ENCODE measurements at regions of chr1 and their contacts with region 1.

Region 1: GRCh38 chr1:203871107-203871875 is 9.9 kb downstream of the SNRPE start:
- DNase-seq: peak; percentile 82
- H3K4me3 ChIP-seq: no peak overlapping the region
- H3K27ac ChIP-seq: no peak overlapping the region
- H3K4me1 ChIP-seq: peaks cover 14% of the 10 kb centered on the region
- H3K27me3 ChIP-seq: no peaks in the 10 kb centered on the region
- CTCF ChIP-seq: peak; percentile 86 to 90
- POLR2A ChIP-seq: no peak

Region 2: GRCh38 chr1:203888807-203889251 is 17.5 kb after region 1 on chr1:
- CTCF ChIA-PET with region 1: interaction called, 16 read pairs
- POLR2A ChIA-PET with region 1: interaction called, 3 read pairs
- dilution Hi-C with region 1: no loop called
- intact Hi-C with region 1: no loop called
- DNase-seq: peak; percentile 92
- H3K4me3 ChIP-seq: no peak overlapping the region
- H3K27ac ChIP-seq: peak overlapping the region; percentile 92
- H3K4me1 ChIP-seq: peaks cover 18% of the 10 kb centered on the region
- H3K27me3 ChIP-seq: no peaks in the 10 kb centered on the region
- CTCF ChIP-seq: no peak
- POLR2A ChIP-seq: no peak

Region 3: GRCh38 chr1:204017032-204017431 is 145.7 kb after region 1 on chr1:
- CTCF ChIA-PET with region 1: interaction called, 10 read pairs
- POLR2A ChIA-PET with region 1: no interaction called
- dilution Hi-C with region 1: no loop called
- intact Hi-C with region 1: no loop called
- DNase-seq: no peak
- H3K4me3 ChIP-seq: no peak overlapping the region
- H3K27ac ChIP-seq: no peak overlapping the region
- H3K4me1 ChIP-seq: no peaks in the 10 kb centered on the region
- H3K27me3 ChIP-seq: peaks cover 14 to 15% of the 10 kb centered on the region in 2 experiments
- CTCF ChIP-seq: no peak
- POLR2A ChIP-seq: no peak

Region 4: DNA sequence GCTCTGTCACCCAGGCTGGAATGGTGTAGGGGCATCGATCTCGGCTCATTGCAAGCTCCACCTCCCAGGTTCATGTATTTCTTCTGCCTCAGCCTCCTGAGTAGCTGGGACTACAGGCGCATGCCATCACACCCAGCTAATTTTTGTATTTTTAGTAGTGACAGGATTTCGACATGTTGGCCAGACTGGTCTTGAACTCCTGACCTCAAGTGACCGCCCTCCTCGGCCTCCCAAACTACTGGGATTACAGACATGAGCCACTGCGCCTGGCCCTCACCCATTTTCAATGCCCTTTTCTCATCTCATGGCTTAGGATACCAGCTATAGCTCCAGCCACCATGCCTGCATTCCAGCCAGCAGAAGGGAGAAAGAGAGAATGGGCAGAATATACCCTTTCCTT is 188.7 kb after region 1 on chr1:
- CTCF ChIA-PET with region 1: interaction called, 15 read pairs
- POLR2A ChIA-PET with region 1: no interaction called
- dilution Hi-C with region 1: no loop called
- intact Hi-C with region 1: no loop called
- DNase-seq: no peak
- H3K4me3 ChIP-seq: no peak overlapping the region
- H3K27ac ChIP-seq: no peak overlapping the region
- H3K4me1 ChIP-seq: peaks cover 4% of the 10 kb centered on the region
- H3K27me3 ChIP-seq: peaks cover 0 to 2% of the 10 kb centered on the region in 2 experiments
- CTCF ChIP-seq: no peak
- POLR2A ChIP-seq: no peak

Region 5: GRCh38 chr1:204080163-204080903 is 209.0 kb after region 1 on chr1:
- CTCF ChIA-PET with region 1: interaction called, 83 read pairs
- POLR2A ChIA-PET with region 1: no interaction called
- dilution Hi-C with region 1: no loop called
- intact Hi-C with region 1: no loop called
- DNase-seq: no peak
- H3K4me3 ChIP-seq: no peak overlapping the region
- H3K27ac ChIP-seq: no peak overlapping the region
- H3K4me1 ChIP-seq: peaks cover 31% of the 10 kb centered on the region
- H3K27me3 ChIP-seq: no peaks in the 10 kb centered on the region
- CTCF ChIP-seq: no peak
- POLR2A ChIP-seq: no peak

Region 6: DNA sequence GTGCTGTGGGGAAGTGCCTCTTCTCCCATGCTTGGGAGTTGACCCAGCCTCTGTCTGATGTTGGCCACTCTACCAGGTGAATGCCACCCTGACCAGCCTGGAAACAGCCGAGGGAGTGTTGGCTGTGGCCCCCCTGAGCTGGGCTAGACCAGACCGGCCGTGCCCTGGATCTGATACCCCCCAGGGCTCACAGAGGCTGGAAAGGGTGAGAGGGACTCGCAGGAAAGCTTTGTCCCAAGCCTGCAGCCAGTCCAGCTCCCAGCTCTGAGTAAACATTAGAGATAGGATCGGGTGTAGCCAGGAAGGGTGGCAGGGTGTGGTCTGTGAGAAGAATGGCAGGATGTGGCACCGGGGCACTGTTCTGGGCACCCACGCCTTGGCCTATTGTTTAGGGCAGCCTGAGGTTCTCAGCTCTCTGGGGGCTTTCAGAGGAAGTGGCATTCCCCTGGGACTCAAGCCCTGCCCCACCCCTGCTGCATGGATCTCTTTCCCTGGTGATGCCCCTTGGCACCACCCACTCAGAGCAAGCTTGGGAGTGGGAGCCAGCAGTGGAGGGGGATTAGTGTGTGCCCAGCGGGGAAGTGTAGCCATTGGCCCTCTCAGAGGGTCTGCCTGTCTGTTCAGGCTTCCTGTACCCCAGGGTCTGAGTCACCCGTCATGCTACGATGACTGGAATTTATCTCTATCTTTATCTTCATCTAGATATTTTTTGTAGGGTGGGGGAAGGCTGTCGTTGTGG is 233.0 kb after region 1 on chr1:
- CTCF ChIA-PET with region 1: interaction called, 50 read pairs
- POLR2A ChIA-PET with region 1: no interaction called
- dilution Hi-C with region 1: no loop called
- intact Hi-C with region 1: no loop called
- DNase-seq: peak; percentile 53
- H3K4me3 ChIP-seq: no peak overlapping the region
- H3K27ac ChIP-seq: peak overlapping the region; percentile 73
- H3K4me1 ChIP-seq: peaks cover 55% of the 10 kb centered on the region
- H3K27me3 ChIP-seq: no peaks in the 10 kb centered on the region
- CTCF ChIP-seq: no peak
- POLR2A ChIP-seq: peak; percentile 20

Region 7: GRCh38 chr1:204207136-204207616 is 335.9 kb after region 1 on chr1:
- CTCF ChIA-PET with region 1: interaction called, 16 read pairs
- POLR2A ChIA-PET with region 1: no interaction called
- dilution Hi-C with region 1: no loop called
- intact Hi-C with region 1: no loop called
- DNase-seq: peak; percentile 41
- H3K4me3 ChIP-seq: no peak overlapping the region
- H3K27ac ChIP-seq: no peak overlapping the region
- H3K4me1 ChIP-seq: no peaks in the 10 kb centered on the region
- H3K27me3 ChIP-seq: no peaks in the 10 kb centered on the region
- CTCF ChIP-seq: peak; percentile 89 to 97
- POLR2A ChIP-seq: no peak